ENCODE measurements at regions of chr4 and their contacts with region 1.

Region 1: DNA sequence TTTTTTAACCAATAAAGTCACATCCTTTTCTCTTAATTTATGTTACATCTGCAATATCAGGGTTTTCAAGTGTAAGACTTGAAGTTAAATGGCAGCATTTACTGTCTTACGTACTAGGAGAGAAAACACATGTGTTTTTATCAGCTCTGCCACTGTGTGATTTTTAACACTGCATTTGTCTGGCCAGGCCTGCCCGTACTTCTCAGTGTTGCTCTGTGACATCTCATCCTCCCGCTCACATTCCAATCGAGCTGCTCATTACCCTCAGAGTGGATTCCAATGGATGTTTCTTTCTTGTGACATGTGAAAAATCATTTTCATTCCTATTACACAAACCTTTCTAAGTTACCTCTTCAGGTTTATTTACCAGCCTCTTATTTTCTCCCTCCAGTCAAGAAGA is 420.3 kb downstream of the FAT4 start:
- DNase-seq: peak; percentile 49
- H3K4me3 Mint-ChIP-seq: no peak overlapping the region
- H3K27ac Mint-ChIP-seq: peak overlapping the region; percentile 72
- H3K4me1 Mint-ChIP-seq: peaks cover 47% of the 10 kb centered on the region
- H3K27me3 Mint-ChIP-seq: no peaks in the 10 kb centered on the region
- CTCF ChIP-seq: no peak

Region 2: GRCh38 chr4:125519371-125520146 is 215.5 kb before region 1 on chr4:
- CTCF ChIA-PET with region 1: no interaction called
- intact Hi-C with region 1: loop called (anchors 2 kb)
- DNase-seq: peak; percentile 28
- H3K4me3 Mint-ChIP-seq: peak overlapping the region; percentile 8
- H3K27ac Mint-ChIP-seq: peak overlapping the region; percentile 96
- H3K4me1 Mint-ChIP-seq: peaks cover 37% of the 10 kb centered on the region
- H3K27me3 Mint-ChIP-seq: no peaks in the 10 kb centered on the region
- CTCF ChIP-seq: no peak